ENCODE measurements at regions of chr12 and their contacts with region 1.

Region 1: DNA sequence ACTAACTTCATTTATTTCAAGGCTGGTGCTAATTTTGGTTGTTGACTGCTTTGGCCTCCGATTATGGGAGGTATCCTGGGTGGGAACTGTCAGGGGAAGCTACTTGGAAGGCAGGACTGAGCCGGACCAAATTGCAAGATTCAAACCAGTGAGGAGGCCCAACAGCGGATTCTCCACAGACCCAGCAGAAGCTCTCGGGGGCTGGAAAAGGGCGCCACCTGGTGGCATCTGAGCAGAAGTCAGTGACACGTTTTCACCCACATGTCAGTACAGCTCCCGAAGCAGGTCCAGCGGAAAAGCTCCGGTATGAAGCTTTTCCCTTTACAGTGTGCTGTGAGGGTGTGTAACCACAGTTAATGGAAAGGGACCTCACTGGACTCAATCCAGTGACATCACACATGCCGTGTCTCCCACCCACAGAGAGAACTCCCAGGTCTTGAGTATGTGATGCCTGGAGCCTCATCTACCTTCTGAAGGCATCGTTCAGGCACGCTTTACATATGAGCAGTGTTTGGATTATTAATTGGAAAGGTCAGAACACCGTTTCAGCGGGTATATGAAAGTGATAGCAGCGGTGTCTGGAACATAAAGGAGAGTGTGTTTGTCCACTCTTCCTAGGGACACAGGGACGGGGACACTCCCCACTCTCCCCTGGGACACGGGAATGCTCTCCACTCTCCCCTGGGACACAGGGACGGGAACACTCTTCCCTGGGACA is 3.6 kb upstream of the P2RX2 start:
- DNase-seq: peak; percentile 71
- ATAC-seq: peak; percentile 87
- H3K4me3 Mint-ChIP-seq: no peak overlapping the region
- H3K27ac Mint-ChIP-seq: peak overlapping the region; percentile 1
- H3K4me1 Mint-ChIP-seq: peaks cover 17% of the 10 kb centered on the region
- H3K27me3 Mint-ChIP-seq: peaks cover 30% of the 10 kb centered on the region
- CTCF ChIP-seq: peak; percentile 99

Region 2: DNA sequence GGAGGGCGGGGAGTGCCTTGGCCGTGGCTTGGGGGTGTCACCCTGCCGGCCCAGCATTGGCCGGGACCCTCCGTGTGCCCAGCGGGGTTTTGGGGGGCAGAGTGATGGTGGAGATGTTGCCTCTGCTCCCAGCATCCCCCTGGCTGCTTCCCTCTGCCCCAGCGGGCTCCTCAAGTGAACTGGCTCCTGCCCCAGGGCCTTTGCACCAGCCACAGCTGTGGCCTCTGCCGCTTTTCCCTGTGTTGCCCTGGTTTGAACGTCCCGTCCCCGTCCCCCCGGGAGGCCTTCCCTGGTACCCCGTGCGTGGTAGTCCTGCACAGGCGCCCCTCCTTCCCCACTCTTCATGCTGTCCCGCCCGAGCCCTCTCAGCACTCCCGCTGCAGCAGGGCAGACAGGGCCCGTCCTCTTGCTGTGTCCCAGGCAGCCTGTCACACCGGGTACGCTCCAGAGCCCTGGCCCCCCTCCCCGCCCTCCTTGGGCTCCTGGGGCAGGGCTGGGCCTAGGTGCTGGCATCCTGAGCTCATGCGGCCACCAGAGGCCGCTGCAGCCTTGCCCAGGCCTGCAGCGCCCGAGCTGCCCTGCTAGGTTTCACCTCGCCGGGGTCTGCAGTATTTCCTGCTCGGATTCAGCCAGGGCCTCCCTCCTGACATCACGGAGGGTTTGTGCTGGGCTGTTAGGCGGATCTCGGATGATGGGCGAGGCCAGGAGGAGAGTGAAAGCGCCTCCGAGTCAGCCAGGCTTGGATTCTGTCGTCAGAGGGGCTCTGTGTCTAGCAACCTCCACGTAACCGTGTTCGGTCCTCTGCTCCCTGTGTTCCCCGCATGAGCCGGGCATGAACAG is 461.3 kb before region 1 on chr12:
- CTCF ChIA-PET with region 1: interaction called, 35 read pairs
- POLR2A ChIA-PET with region 1: no interaction called
- intact Hi-C with region 1: loop called (anchors 1 kb)
- DNase-seq: peak; percentile 70
- ATAC-seq: peak; percentile 98
- H3K4me3 Mint-ChIP-seq: no peak overlapping the region
- H3K27ac Mint-ChIP-seq: no peak overlapping the region
- H3K4me1 Mint-ChIP-seq: peaks cover 2% of the 10 kb centered on the region
- H3K27me3 Mint-ChIP-seq: no peaks in the 10 kb centered on the region
- CTCF ChIP-seq: peak; percentile 59

Region 3: DNA sequence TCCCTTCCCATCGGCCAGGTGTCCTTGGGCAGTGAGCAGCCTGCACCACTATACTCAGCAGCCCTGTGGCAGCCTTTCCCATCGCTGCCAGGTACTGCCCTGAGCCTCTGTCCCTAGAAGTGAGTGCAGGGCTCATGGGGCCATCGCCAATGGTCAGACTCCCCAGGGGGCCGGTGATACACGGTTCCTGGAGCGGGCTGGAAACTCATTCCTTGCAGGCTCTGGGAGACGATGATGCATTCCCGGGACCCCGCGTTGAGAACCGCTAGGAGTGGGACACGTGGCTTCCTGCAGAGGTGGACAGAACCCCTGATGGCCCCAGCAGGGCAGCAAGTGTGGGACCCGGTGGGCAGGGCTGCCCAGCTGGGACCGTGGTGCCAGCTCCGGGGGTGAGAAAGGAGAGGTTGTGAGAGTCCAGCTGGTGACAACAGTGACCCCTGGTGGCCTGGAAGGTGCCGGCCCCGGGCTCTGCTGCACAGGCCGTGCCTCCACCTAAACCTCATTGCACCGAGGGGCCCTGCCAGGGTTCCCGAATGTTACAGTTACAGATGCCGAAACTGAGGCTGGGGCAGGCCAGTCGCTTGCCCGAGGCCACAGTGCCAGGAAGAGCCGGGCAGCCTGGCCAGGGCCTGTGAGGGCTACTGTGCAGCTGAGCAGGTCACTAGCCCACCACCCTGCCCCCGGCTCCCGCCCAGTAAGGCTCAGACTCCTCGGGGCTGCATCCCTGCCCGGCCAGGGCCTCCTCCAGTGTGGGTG is 91.3 kb before region 1 on chr12:
- CTCF ChIA-PET with region 1: interaction called, 8 read pairs
- POLR2A ChIA-PET with region 1: no interaction called
- intact Hi-C with region 1: loop called (anchors 1 kb)
- DNase-seq: peak; percentile 71
- ATAC-seq: peak; percentile 85
- H3K4me3 Mint-ChIP-seq: no peak overlapping the region
- H3K27ac Mint-ChIP-seq: no peak overlapping the region
- H3K4me1 Mint-ChIP-seq: peaks cover 8% of the 10 kb centered on the region
- H3K27me3 Mint-ChIP-seq: no peaks in the 10 kb centered on the region
- CTCF ChIP-seq: peak; percentile 91

Region 4: DNA sequence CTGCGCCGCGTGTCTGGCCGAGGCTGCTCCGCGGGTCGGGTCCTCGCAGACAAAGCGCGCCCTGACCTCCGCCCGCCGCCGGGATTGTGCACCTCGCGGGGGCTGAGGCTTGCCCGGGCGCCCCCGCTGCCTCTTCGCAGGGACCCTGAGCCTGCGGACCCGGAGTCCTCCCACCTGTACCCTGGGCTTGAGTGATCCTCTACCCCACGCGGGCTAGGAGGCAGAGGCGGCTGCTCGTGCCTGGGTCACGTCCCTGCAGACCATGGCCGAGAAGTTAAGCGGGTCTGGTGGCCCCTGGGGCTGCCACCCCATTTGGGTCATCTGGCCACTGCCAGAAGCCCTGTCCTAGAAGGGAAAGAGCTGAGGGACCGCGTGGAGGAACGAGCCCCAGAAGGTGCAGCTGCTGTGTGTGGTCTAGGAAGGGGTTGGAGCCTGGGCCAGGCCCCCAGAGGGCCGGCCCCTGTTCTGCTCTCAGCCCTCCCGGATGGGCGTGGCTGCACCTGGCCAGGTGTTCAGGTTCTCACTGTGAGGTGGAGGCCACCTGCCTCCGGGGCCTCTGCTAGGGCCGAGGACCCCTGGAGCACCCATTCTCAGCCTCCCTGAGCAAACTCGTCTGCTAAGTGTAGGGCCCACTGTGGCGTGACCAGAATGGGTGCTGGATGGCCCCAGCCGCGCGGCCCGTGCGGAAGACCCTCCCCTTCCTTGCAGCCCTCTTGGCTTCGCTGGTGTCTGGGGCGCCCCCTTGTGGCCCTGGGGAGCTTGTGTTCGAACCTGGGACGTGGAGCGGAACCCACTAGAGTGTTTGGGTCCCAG is 54.2 kb before region 1 on chr12:
- CTCF ChIA-PET with region 1: no interaction called
- POLR2A ChIA-PET with region 1: no interaction called
- intact Hi-C with region 1: loop called (anchors 1 kb)
- DNase-seq: peak; percentile 75
- ATAC-seq: peak; percentile 69
- H3K4me3 Mint-ChIP-seq: peak overlapping the region; percentile 77
- H3K27ac Mint-ChIP-seq: no peak overlapping the region
- H3K4me1 Mint-ChIP-seq: peaks cover 21% of the 10 kb centered on the region
- H3K27me3 Mint-ChIP-seq: no peaks in the 10 kb centered on the region
- CTCF ChIP-seq: peak; percentile 35

Region 5: GRCh38 chr12:132600048-132601032 is 14.7 kb before region 1 on chr12:
- CTCF ChIA-PET with region 1: interaction called, 13 read pairs
- POLR2A ChIA-PET with region 1: no interaction called
- intact Hi-C with region 1: loop called (anchors 1 kb)
- DNase-seq: no peak
- ATAC-seq: peak; percentile 57
- H3K4me3 Mint-ChIP-seq: peak overlapping the region; percentile 79
- H3K27ac Mint-ChIP-seq: no peak overlapping the region
- H3K4me1 Mint-ChIP-seq: peaks cover 27% of the 10 kb centered on the region
- H3K27me3 Mint-ChIP-seq: peaks cover 18% of the 10 kb centered on the region
- CTCF ChIP-seq: no peak